SK-MEL-5 (cell line): ENCODE measurements at regions of chr11 and their contacts with region 1.

Region 1: GRCh38 chr11:12269104-12269441 is 108.3 kb upstream of the PARVA start:
- DNase-seq: no peak

Region 2: DNA sequence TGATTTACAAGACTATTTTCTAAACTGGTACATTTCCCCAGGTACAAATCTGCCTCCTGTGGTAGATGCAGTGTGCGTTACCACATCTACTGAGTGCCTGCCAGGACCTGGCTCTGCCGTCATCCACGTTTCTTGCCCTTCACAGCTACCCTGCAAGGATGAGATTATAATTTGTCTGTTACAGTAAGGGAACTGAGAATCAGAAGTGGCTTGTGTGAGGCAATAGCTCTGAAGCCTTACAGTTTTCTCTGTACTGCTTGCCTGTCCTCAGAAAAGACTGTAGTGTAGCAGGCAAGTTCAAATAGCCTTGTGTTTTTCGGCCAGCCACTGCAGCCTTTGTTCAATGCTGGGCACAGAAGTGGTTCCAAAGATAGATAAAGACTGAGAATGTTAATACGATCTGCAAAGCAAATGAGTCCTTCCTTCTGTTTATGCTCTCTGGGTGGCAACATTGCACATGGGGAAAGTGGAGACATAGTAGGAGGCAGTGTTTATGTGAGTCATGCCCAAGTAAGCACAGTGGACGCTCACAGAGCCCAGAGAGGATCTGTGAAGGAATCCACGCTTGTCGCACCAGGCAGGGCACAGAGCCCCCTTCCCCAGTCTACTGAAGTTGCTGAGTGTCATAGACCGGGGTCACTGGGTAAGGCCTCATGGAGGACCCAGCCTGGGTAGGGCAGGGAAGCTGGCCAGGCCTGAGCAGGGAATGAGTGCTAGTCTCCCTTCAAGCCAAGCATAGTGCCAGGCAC is 109.5 kb before region 1 on chr11:
- in situ Hi-C with region 1: loop called (anchors 10 kb)
- DNase-seq: no peak